ENCODE measurements at regions of chr19 and their contacts with region 1.

Region 1: DNA sequence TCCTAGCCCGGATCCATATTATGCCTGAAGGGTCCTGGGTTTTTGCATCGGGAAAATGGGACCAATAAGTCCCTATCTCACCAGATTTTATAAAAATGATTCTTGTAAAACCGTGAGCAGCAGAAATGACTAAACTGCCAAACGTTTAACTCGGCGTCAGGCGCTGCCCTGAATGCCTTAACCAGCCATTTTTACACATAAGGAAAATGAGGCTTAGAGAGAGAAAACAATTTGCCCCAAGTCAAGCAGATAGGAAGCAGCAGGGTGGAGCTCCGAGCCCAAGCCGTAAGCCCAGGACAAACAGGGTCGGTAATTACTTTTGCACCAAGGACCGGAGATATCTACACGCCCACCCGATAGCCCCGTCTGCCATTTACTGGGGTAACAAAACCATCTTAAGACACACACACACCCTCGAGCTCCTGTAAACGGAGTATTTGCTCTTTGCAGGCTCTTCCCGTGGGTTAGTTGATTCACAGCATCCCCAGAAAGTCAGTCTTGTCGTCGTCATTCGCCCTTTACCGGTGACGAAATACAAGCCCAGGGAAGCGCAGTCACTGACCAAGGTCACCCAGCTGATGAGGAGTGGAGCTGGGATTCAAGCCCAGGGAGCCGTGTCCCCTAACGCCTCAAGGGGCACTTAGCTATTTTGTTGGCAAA is 16.0 kb upstream of the MRI1 start:
- DNase-seq: no peak

Region 2: DNA sequence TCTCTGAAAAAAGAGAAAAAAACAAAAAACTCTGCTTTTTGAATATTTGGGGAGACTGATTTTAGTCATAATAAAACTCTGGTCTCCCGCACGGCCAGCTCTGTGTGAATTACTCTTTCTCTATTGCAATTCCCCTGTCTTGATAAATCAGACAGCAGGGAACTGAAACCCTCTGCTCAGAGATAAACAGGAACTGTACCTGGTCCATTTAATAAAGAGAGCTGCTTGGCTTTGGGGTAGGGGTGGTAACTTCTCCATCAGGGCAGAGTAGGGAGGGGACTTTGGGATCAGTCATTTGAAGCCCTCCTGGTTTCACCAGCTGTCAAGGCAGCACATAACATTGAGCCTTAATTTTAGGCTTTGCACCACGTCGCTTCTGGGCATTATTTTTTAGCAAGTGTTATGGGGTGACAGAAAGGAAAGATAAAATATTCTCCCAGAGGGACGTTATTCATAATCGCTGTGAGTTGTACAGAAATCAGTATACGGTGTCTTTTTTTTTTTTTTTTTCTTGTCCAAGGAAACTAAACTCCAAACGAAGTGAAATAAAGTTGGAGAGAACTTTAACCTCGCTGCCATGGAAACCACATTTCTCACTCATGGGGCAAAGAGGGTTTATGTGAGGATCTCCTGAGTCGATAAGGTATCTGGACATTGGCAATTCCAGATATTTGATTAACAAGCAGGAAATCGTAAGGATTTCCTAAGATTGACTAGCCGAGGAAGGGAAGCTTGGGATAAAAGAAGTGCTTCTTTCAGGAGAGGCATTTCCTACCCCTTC is 83.0 kb before region 1 on chr19:
- CTCF ChIA-PET with region 1: no interaction called
- POLR2A ChIA-PET with region 1: no interaction called
- DNase-seq: no peak

Region 3: GRCh38 chr19:13731147-13731964 is 16.9 kb before region 1 on chr19:
- CTCF ChIA-PET with region 1: no interaction called
- POLR2A ChIA-PET with region 1: interaction called, 28 read pairs
- DNase-seq: peak; percentile 99

Region 4: GRCh38 chr19:13764101-13764807 is 16.0 kb after region 1 on chr19 and contains the start of gene MRI1:
- CTCF ChIA-PET with region 1: interaction called, 3 read pairs
- POLR2A ChIA-PET with region 1: interaction called, 16 read pairs
- DNase-seq: peak; percentile 87

Measured in HEK293T (cell line).